Head of caudate nucleus (tissue), 42 donors: ENCODE measurements at regions of chr3 and their contacts with region 1.

Region 1: DNA sequence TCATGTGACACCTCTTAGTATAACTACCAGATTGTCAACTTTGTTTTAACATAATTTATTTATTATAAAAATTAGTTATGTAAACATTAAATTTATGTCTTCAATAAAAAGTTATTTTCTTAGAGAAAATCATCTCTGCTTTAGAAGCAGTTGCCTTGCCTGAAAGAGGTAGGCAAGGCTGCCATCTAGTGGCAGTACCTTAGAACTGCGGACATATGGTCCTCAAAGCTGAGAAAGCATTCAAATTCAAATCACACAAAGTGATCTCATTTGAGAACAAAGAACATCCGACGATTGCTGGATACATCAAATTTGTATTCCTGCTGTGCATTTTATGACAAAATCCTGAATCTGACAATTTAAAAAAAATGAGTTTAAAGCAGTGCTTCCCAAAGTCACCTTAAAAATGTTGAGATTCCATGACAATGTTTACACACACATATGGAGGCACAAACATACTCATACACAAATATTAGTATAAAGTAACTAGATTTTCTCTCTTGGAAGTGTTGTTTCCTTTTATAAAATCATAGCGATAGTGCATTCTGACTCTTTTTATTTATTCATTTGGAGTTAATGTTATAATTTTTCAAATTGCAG is 617.4 kb downstream of the CADM2 start:
- DNase-seq: peak in 41 of 42 donors; percentile 55 to 95 (median 85)

Region 2: GRCh38 chr3:84547971-84548970 is 1027.9 kb before region 1 on chr3:
- intact Hi-C with region 1: loop called (anchors 10 kb)
- DNase-seq: peak in 35 of 42 donors; percentile 3 to 69 (median 26)

Region 3: DNA sequence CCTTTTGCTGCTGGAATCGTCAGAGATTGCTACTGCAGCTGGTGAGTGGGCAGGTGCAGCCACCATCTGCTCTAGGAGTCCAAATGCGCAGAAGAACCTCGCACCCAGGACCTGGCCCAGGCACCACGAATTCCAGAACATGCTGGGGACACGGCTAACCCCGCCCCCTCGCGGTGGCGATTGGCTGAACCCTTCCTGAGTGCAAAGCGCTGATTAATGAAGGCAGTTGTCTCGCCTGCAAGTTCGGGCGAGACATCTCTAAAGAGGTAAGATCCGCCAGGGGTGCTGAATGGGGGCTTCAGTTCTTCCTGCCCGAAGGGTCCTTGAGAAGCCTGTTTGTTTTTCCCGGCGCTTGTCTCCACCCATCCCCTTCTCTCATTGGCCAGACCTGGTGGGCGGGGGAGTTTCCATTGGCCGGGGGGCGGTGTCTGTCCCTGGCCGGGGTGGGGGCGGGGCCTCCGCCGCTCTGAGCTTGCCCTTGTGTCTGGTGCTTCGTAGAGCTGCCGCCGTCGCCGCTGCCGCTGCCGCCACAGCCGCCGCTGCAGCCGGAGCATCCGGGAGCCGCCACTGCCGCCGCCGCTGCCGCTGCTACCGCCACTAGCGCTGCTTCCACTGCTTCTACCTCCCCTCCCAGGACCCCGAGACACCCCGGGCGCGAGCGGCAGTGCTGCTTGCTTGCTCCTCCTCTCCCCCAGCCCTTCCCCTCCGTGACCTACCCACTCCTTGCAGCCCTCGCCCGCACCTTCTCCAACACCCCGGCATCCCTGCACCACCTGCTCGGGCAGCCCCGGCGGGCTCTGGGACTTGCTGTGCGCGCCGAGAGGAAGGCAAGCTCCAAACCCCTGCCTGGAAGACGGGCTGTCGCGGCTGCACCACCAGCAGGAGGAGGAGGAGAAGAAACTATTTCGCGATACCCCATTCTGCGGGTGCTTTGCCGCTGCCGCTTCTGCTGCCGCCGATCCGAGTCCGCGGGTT is 617.4 kb before region 1 on chr3 and contains the start of gene CADM2:
- intact Hi-C with region 1: loop called (anchors 5 kb)
- DNase-seq: peak; percentile 92 to 98 (median 96)

Region 4: GRCh38 chr3:85360742-85361387 is 215.3 kb before region 1 on chr3:
- intact Hi-C with region 1: loop called (anchors 10 kb)
- DNase-seq: peak; percentile 39 to 94 (median 80)

Region 5: DNA sequence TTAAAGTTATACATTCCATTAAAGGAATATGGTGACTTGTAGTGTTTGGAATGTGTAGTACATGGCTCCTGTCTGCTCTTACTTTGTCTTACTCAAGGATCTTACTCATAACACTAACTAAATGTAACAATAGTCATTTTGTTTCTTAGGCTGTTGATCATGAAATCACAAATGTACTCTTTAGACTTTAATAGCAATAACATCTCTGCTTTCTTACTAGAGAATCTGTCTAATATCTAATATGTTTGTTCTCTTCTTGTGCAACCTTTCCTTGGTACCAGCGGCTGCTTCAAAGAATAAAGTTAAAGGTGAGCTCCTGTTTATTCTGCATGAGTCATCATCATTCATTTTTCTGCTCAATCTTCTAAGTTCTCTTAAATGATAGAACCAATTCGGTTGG is 150.1 kb after region 1 on chr3:
- intact Hi-C with region 1: no loop called
- DNase-seq: no peak

Region 6: DNA sequence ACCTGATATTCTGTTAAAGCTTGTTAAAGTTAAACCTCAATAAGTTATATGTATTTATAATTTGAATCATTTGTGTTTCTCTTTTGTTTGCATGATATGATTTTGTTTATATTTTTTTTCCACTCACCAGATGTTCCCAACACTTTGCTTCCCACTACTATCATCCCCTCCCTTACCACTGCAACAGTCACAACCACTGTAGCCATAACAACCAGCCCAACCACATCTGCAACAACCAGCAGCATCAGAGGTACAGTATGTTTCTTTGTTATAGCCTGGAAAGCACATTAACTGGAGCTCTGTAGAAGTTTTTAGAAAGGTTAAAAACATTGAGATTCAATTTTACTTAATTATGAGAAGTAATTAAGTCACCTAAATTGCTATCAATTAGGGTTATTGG is 402.8 kb after region 1 on chr3:
- intact Hi-C with region 1: no loop called
- DNase-seq: no peak